ENCODE measurements at regions of chr1 and their contacts with region 1.

Region 1: GRCh38 chr1:234978397-234979295 is 150.0 kb downstream of the TOMM20 start:
- DNase-seq: peak; percentile 77 to 89
- ATAC-seq: peak; percentile 69

Region 2: DNA sequence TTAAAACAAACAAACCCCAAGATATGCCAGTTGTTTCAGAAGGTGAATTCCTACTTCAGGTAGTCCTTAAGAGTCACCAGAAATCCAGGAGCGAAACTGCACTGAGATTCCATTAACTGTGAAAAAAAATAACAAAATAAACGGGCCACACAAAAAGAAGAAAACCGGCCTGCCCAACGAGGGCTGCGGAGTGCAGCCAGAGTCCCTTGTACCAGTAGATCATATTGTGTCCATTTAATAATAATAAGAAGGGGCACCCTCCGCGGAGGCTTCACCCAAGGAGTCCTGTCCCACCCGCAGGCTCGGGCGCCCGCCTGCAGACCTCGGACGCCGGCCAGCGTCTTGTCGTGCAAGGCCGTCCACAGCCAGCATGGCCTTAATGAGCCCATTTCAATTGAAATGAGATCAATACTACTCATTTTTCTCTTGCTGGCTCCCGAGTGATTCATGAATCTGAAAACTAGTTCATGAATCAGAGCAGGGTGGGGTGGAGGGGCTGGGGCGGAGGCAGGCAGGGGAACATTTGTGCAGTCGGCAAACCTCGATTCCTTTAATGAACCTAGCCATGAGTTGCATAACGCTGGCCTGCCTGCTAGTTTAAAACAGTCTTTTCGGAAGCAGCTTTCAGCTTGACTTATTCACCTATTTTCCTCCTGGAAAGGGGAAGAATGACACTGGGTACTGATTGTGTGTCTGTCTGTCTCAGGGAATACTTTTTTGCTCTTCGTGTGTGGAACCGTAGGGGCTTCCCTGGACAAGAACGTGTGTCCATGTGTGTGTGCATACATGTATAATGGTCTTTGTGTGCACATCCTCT is 255.5 kb before region 1 on chr1:
- intact Hi-C with region 1: loop called in 1 of 2 experiments (anchors 10 kb)
- DNase-seq: peak; percentile 50 to 74
- ATAC-seq: peak; percentile 8

Region 3: DNA sequence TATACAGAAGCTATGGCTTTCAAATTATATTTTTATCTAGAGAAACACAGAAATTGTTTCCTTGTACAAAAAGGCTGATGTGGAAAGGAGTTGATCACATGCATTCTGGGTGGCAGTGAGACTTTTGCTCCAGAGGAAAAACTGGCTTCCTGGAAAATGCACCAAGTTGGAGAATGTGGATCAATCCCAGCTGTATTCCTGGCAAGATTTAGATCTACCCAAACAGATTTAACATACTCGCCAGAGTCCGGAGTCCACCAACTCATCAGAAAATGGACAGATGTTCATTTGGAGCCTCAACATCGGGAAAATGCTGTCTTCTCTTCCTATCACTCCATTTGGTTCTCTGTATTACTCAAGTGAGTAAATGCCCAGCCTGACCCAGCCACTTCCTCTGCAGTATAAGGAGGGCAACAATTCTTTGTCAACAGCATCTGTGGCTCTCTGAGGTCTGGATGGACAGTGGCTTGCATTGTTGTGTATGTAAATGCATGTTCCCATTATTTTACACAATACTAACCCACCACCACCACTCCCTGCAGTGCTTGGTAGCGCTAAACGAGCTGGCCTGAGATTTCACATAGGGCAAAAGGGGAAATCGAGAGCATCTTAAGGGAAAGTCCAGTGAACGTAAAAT is 142.5 kb before region 1 on chr1:
- intact Hi-C with region 1: no loop called
- DNase-seq: no peak
- ATAC-seq: no peak

Region 4: DNA sequence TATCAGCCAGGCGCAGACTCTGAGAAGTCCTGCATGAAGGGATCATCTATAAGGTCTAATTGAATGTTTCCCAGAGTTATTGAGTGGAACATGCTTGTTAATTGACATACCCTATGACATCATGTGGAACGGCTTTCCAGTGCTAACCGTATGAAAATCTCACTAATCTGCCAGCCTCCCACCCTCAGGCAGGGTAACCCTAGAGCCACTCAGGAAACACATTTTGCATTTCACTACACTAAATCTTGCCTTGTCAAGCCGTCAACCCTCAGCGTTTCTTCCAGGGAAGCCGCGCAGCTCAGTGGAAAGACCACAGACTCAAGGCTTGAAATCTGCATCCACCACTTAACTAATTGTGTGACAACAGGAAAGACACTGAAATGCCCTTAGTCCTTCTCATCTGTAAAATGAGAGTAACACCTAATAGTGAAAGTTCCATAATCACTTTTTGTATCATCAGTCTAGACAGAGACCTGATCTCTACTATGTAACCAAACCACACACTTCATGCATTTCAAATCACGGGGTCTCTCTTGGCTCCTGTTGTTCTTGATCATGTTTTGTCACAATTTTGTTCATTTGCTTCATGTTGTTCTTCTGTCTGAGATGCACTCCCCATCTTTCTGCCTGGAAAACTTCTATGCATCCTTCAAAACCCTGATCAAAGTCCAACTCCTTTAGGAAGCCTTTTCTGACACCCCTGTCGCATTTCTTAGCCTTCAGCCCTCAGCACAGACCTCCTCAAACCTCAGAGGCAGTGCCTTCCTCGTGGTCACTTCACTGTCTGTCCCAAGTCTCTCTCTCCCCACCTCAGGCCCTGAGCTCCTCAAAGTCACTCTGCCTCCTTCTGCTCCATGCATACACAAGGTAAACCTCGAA is 96.5 kb before region 1 on chr1:
- intact Hi-C with region 1: no loop called
- DNase-seq: no peak
- ATAC-seq: no peak

Measured in left colon (tissue), 2 donors.